ENCODE measurements at regions of chr20 and their contacts with region 1.

Region 1: GRCh38 chr20:31849455-31849925 is 4.1 kb upstream of the FOXS1 start:
- DNase-seq: no peak
- H3K4me3 ChIP-seq: no peak overlapping the region
- H3K27ac ChIP-seq: no peak overlapping the region
- H3K4me1 ChIP-seq: peaks cover 7% of the 10 kb centered on the region
- CTCF ChIP-seq: no peak

Region 2: GRCh38 chr20:31830406-31830981 is 19.0 kb before region 1 on chr20:
- CTCF ChIA-PET with region 1: interaction called, 17 read pairs
- POLR2A ChIA-PET with region 1: no interaction called
- intact Hi-C with region 1: no loop called
- DNase-seq: no peak
- H3K4me3 ChIP-seq: no peak overlapping the region
- H3K27ac ChIP-seq: no peak overlapping the region
- H3K4me1 ChIP-seq: peaks cover 8% of the 10 kb centered on the region
- CTCF ChIP-seq: no peak

Region 3: GRCh38 chr20:31908016-31908415 is 58.5 kb after region 1 on chr20:
- CTCF ChIA-PET with region 1: no interaction called
- POLR2A ChIA-PET with region 1: no interaction called
- intact Hi-C with region 1: no loop called
- DNase-seq: no peak
- H3K4me3 ChIP-seq: no peak overlapping the region
- H3K27ac ChIP-seq: no peak overlapping the region
- H3K4me1 ChIP-seq: no peaks in the 10 kb centered on the region
- CTCF ChIP-seq: no peak

Region 4: GRCh38 chr20:32018269-32019074 is 169.0 kb after region 1 on chr20:
- CTCF ChIA-PET with region 1: no interaction called
- POLR2A ChIA-PET with region 1: no interaction called
- intact Hi-C with region 1: loop called (anchors 5 kb)
- DNase-seq: peak; percentile 60
- H3K4me3 ChIP-seq: peak overlapping the region; percentile 73
- H3K27ac ChIP-seq: no peak overlapping the region
- H3K4me1 ChIP-seq: peaks cover 6% of the 10 kb centered on the region
- CTCF ChIP-seq: 0 out of 2 replicates have a peak, but pooled peaks have one; percentile 23

Region 5: DNA sequence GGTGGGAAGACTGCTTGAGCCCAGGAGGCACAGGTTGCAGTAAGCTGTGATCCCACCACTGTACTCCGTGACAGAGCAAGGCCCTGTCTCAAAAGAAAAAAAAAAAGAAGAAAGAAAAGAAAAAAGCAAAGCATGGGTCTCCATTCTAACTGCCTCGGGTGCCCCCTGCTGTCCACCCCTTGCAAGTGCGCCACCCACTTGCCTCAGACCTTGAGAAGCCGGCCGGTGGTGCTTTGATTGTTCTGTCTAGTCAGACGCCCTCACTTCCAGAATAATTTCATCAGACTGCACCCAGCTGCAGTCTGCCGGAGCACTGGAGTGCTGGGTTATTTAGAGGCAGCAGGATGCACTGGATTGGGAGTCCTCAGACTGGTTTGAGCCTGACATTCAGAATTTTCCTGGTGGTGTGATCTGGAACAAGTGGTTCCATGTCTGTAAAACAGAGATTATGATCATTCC is 242.4 kb after region 1 on chr20:
- CTCF ChIA-PET with region 1: interaction called, 3 read pairs
- POLR2A ChIA-PET with region 1: no interaction called
- intact Hi-C with region 1: loop called (anchors 1 kb)
- DNase-seq: peak; percentile 83
- H3K4me3 ChIP-seq: no peak overlapping the region
- H3K27ac ChIP-seq: no peak overlapping the region
- H3K4me1 ChIP-seq: peaks cover 11% of the 10 kb centered on the region
- CTCF ChIP-seq: peak; percentile 95